AG04449 (cell line): ENCODE measurements at regions of chr10 and their contacts with region 1.

Region 1: DNA sequence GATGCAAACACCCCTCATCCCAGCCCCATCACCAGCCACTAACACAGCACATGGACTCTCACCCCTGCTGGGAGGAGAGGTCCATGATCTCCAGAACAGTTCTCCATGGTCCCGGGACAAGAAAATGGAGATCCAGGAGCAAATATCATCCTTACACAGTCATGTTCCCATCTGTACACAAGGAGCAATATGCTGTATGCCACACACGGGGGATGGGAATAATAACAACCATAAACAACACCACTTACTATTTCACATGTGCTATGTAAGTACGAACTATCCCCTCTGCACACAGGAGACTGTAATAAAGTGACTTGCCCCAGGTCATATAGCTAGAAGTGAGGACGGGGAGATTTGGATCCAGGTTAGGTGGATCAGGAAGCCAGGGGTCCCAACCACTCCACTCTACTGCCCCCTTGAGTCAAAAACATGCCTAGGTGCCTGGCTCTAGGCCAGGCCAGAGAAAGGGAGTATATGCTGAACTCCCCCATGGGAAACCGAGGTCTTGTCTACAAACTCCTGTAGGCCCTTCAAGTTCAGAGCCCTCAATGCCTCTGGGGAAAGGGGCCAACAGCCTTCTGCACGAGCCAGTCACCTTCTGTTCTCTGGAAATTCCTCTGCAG is 34.1 kb downstream of the LRRC20 start:
- DNase-seq: no peak
- H3K4me3 ChIP-seq: no peak overlapping the region
- CTCF ChIP-seq: peak; percentile 59

Region 2: DNA sequence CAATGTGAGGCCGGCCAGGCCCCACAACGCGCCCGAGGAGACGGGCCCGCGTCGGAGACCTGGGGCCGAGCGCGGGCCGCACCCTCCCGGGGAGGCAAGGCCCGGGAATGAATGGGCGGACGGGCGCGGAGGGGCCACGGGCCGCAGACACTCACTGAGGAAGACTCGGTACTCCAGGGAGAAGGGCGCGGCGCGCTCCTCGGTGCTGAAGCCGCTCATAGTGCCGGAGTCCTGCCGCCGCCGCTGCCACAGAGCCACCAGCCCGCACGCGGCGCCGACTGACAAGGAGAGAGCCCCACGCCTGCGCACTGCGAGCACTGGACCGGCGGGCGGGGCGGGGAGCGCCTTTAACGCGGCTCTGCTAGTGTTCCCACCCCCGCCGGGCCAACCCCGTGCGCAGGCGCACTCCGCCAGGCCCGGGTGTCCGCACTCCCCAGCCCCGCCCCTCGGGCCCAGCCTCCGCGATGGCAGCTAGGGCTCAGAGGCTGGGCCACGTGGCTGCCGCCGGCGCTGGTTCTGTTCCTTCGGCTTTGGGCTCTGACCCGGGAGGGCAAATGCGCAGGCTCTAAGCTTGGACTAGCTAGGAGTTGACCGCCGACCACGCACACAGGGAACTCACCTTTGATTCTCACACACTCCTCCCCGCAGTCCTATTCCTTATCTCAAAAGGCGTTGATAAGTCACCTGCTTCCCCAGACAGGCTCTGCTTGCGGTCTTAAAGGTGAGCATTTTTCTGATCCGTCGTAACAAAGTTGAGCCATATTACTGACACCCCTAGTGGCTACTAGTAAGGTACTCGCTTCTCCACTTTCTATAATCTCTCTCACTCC is 115.0 kb before region 1 on chr10 and contains the start of gene PPA1:
- CTCF ChIA-PET with region 1: interaction called, 10 read pairs
- POLR2A ChIA-PET with region 1: interaction called, 3 read pairs
- DNase-seq: peak; percentile 47
- H3K4me3 ChIP-seq: peak within 1 kb of the TSS; percentile 81
- CTCF ChIP-seq: peak; percentile 21

Region 3: DNA sequence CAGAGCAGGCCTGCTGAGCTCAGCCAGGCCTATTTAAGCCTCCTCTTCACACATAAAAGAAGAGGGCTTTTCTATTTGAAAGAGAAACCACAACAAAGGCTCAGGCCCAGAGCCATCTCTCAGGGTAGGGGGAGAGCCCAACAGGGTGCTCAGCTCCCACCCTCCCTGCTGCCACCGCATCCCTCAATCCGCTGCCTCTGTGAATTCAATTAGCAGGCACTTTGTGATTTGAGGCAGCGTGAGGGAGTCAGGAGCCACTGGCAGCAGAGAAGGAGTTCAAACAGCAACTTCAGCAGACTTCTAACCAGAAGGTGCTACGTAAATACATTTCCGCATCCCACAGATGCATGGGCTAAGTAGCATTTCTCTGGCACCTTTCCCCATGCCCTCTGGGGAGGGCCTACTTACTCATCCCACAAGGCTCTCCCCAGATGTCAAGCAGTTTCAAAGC is 11.1 kb before region 1 on chr10:
- CTCF ChIA-PET with region 1: interaction called, 11 read pairs
- POLR2A ChIA-PET with region 1: no interaction called
- DNase-seq: peak; percentile 26
- H3K4me3 ChIP-seq: no peak overlapping the region
- CTCF ChIP-seq: no peak

Region 4: DNA sequence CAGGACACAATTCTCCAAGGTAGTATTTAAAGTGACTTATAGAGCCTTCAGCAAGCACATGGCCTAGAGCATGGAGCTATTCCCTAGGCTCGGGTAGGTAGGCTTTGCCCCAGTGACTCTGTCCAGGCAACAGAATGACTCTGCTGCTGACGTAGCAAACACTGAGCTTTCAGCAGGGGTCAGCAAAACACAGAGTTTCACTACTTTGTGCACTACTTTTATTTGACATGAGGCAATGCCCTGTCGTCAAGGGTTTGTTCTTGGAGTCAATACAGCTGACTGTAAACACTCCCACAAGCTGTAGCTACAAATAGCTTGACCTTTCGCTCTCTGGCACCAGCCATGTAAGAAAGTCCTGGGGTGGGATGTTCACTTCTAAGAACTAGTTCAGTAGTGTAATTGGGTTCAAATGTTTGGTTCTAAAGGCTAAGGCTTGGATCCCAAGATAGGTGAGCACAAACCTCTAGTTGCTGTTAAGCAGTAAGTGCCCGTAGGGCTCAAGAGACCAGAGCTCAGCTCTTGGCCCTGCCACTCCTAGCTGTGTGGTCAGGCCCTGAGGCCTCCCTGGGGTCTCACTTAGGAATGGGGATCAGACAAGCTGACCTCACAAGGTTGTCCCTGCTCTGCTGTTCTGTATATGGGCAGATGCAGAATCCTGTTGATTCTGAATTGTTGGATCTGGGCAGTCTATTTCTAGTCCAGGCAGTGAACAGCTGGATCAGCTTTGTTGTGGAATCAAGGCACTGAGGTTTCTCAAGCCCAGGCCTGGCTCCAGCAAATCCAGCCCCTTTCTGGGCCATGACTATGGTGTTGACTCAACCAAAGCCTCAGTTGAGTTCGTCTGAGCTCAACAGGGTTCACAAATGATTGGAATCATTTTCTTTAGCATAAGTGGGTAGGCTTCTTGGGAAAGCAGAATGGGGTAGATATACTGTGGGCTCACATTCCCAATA is 82.4 kb after region 1 on chr10:
- CTCF ChIA-PET with region 1: no interaction called
- POLR2A ChIA-PET with region 1: no interaction called
- DNase-seq: no peak
- H3K4me3 ChIP-seq: no peak overlapping the region
- CTCF ChIP-seq: no peak